Transverse colon (tissue), 4 donors: ENCODE measurements at regions of chr5 and their contacts with region 1.

Region 1: DNA sequence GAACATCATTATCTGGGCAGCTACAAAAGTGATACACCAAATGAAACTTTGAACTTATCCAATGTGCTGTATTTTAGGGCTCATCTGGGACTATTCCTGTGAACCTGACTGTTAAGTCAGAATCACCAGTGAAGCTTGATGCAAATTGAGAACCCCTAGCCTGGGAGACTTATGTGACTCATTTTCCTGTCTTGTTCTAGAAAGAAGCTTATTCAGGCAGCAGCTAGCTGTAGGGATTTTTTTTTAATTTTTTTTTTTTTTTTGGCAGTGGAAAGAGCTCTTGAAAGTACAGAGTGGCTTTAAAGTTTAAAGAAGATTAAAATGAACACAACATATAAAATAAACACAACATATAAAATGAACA is 81.1 kb upstream of the TNFAIP8 start:
- DNase-seq: no peak
- H3K4me3 ChIP-seq: no peak overlapping the region
- H3K27ac ChIP-seq: peak overlapping the region; percentile 49 to 75 (median 61)
- H3K4me1 ChIP-seq: peaks cover 4 to 33% (median 23%) of the 10 kb centered on the region in 4 donors
- H3K27me3 ChIP-seq: no peaks in the 10 kb centered on the region
- CTCF ChIP-seq: no peak
- EP300 ChIP-seq: no peak
- POLR2A ChIP-seq: no peak

Region 2: DNA sequence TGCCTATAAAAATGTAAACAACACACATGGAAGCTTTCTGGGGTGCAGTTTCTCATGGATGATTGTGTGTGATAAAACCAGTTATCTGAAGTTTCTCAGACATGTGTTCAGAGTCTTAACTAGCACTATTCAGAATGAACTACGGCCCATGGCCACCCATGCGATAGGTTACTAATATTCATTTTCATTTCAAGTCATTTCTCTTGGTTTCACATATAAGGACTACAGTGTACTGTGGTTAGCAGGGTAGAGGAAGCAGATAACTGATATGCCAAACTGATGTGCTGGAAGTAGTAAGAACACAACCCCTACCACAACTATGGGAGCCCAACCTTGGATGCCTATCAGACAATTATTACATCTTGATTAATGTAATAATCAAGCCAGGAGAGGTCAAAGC is 658.5 kb before region 1 on chr5:
- in situ Hi-C with region 1: no loop called
- intact Hi-C with region 1: no loop called
- DNase-seq: no peak
- H3K4me3 ChIP-seq: no peak overlapping the region
- H3K27ac ChIP-seq: no peak overlapping the region
- H3K4me1 ChIP-seq: no peaks in the 10 kb centered on the region
- H3K27me3 ChIP-seq: no peaks in the 10 kb centered on the region
- CTCF ChIP-seq: no peak
- EP300 ChIP-seq: no peak
- POLR2A ChIP-seq: no peak

Region 3: GRCh38 chr5:119328753-119329602 is 54.2 kb after region 1 on chr5:
- in situ Hi-C with region 1: no loop called
- intact Hi-C with region 1: loop called (anchors 10 kb)
- DNase-seq: peak; percentile 35
- H3K4me3 ChIP-seq: no peak overlapping the region
- H3K27ac ChIP-seq: peak overlapping the region; percentile 55 to 69 (median 58)
- H3K4me1 ChIP-seq: peaks cover 5 to 64% (median 22%) of the 10 kb centered on the region in 4 donors
- H3K27me3 ChIP-seq: no peaks in the 10 kb centered on the region
- CTCF ChIP-seq: no peak
- EP300 ChIP-seq: no peak
- POLR2A ChIP-seq: no peak